Activated T-helper 2 cell treated with anti-CD3 and anti-CD28 coated beads, Interferon-gamma antibody, Interleukin-2, Interleukin-4, amounts not matched to agents 10 μg/mL and 5 μg/mL and 100 μg/mL, durations not matched to agents 14 hours and 24 hours and 36 hours (primary cell): ENCODE measurements at regions of chr1 and their contacts with region 1.

Region 1: DNA sequence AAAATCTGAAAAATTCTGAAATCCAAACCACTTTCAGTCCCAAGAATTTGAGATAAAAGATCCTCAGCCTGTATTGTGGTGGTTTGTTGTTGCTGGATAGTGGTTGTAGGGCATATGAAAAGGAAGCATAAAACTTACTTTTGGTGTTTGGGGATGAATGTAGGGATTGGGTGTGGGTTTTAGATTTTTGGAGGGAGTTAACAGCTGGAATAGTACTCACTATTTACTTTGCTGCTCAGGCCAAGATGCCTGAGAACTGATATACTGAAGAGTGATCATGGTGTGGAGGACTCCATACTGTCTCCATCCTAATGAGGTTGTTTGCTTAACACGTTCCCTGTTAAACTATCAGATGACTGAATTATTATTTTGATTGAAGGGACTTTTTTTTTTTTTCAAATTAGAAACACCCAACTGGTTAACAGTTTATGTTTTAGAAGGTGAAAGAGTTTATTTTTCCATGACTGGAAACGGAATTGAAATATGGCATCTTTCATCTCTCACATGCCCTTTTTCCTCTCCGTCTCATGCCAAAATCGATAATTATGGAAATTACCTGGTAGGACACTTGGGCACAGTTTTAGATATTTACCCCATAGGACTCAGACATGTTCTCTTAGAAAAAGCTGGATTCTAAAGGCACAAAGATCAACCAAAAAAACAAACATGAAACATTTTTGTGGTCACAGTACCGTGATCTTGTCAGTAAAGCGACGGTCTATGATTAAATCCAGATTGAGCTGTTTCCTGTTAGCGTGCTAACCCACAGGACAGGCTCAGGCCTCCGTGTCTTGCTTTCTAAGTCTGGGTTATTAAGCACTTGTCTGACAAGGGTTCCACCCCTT is 37.3 kb downstream of the RGL1 start:
- DNase-seq: peak; percentile 12
- H3K4me3 Mint-ChIP-seq: peak overlapping the region; percentile 73
- H3K27ac Mint-ChIP-seq: peak overlapping the region; percentile 89
- H3K4me1 Mint-ChIP-seq: peaks cover 32% of the 10 kb centered on the region
- H3K27me3 Mint-ChIP-seq: no peaks in the 10 kb centered on the region

Region 2: GRCh38 chr1:183655562-183656075 is 186.6 kb before region 1 on chr1:
- intact Hi-C with region 1: loop called (anchors 5 kb)
- DNase-seq: peak; percentile 44
- H3K4me3 Mint-ChIP-seq: no peak overlapping the region
- H3K27ac Mint-ChIP-seq: no peak overlapping the region
- H3K4me1 Mint-ChIP-seq: peaks cover 38% of the 10 kb centered on the region
- H3K27me3 Mint-ChIP-seq: no peaks in the 10 kb centered on the region

Region 3: DNA sequence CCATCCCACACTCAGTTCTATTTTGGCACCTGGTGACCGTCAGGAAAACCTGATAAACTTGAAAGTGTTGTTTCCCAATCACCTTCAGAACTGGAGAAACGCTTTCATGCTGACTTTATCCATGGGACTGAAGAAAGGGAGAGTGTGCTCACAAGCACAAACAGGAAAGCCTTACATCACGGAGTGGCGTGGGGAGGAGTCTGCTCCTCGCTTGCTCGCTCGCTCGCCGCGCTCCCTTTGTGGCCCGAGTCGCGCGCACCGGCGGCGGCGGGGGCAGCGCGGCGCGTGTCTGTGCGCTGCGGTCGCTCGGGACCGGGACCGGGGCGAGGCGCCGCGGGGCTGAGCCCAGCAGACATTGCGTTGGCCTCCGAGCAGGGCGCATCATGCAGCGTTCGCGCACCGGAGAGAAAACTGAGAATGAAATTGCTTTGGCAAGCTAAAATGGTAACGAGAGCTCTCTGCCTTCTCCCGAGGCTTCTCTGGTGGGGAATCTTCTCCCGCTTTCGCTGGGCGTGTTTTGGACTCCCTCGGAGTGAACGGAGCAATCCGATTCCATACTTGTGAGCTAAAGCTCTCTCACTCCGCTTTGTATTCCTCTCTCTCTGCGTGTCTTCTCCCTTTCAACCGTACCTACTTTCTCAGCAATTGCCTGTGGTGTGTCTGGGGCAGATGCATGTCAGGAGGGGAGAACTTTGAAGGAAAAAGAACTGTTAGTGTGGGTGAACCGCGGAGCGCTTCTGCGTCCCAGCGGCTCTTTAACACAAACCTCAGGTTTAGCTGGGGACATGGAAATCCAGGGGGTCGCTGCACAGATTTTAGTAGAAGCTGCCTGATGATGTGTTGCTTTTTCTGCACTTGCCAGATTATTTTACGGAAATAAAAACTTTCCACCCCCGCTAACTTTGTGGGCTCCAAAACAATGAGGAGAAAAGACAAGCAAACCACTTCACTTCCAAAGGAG is 37.0 kb before region 1 on chr1 and contains the start of gene RGL1:
- intact Hi-C with region 1: loop called (anchors 2 kb)
- DNase-seq: peak; percentile 27
- H3K4me3 Mint-ChIP-seq: peak within 1 kb of the TSS; percentile 83
- H3K27ac Mint-ChIP-seq: no peak within 1 kb of the TSS
- H3K4me1 Mint-ChIP-seq: peaks cover 17% of the 10 kb centered on the region
- H3K27me3 Mint-ChIP-seq: peaks cover 15% of the 10 kb centered on the region
- total RNA-seq, gene RGL1: 2.2 TPM in 2 replicates

Region 4: GRCh38 chr1:183896466-183897048 is 54.4 kb after region 1 on chr1:
- intact Hi-C with region 1: loop called (anchors 5 kb)
- DNase-seq: no peak
- H3K4me3 Mint-ChIP-seq: no peak overlapping the region
- H3K27ac Mint-ChIP-seq: peak overlapping the region; percentile 40
- H3K4me1 Mint-ChIP-seq: peaks cover 16% of the 10 kb centered on the region
- H3K27me3 Mint-ChIP-seq: no peaks in the 10 kb centered on the region

Region 5: DNA sequence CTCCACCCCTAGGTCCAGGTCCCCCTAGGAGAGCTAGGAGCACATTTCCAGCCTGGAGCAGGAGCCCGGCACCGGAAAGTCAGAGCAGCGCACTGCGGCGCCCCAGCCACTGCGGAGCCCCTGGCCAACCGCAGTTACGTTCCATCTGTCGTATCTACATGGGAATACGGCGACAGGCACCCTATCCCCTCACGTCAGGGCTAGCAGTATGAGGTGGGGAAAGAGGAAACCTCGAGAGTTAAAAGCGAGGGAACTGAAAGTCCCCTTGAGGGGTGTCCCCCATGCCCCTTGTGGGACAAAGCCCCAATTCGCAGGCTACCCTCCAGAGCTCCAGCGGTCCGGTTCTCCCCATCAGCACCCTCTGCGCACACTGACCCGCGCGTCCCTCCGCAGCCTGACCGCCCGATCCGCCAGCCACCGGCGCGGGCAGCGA is 194.4 kb after region 1 on chr1:
- intact Hi-C with region 1: loop called (anchors 10 kb)
- DNase-seq: no peak
- H3K4me3 Mint-ChIP-seq: peak overlapping the region; percentile 48
- H3K27ac Mint-ChIP-seq: no peak overlapping the region
- H3K4me1 Mint-ChIP-seq: peaks cover 19% of the 10 kb centered on the region
- H3K27me3 Mint-ChIP-seq: peaks cover 74% of the 10 kb centered on the region